BJ (cell line): ENCODE measurements at regions of chr11 and their contacts with region 1.

Region 1: GRCh38 chr11:12963792-12964536 is 45.2 kb upstream of the RASSF10 start:
- DNase-seq: no peak
- H3K4me3 ChIP-seq: no peak overlapping the region
- H3K27me3 ChIP-seq: peaks cover 2% of the 10 kb centered on the region
- CTCF ChIP-seq: peak; percentile 84

Region 2: GRCh38 chr11:12331239-12331874 is 632.6 kb before region 1 on chr11:
- CTCF ChIA-PET with region 1: interaction called, 46 read pairs
- POLR2A ChIA-PET with region 1: no interaction called
- DNase-seq: peak; percentile 40
- H3K4me3 ChIP-seq: no peak overlapping the region
- H3K27me3 ChIP-seq: no peaks in the 10 kb centered on the region
- CTCF ChIP-seq: peak; percentile 69

Region 3: DNA sequence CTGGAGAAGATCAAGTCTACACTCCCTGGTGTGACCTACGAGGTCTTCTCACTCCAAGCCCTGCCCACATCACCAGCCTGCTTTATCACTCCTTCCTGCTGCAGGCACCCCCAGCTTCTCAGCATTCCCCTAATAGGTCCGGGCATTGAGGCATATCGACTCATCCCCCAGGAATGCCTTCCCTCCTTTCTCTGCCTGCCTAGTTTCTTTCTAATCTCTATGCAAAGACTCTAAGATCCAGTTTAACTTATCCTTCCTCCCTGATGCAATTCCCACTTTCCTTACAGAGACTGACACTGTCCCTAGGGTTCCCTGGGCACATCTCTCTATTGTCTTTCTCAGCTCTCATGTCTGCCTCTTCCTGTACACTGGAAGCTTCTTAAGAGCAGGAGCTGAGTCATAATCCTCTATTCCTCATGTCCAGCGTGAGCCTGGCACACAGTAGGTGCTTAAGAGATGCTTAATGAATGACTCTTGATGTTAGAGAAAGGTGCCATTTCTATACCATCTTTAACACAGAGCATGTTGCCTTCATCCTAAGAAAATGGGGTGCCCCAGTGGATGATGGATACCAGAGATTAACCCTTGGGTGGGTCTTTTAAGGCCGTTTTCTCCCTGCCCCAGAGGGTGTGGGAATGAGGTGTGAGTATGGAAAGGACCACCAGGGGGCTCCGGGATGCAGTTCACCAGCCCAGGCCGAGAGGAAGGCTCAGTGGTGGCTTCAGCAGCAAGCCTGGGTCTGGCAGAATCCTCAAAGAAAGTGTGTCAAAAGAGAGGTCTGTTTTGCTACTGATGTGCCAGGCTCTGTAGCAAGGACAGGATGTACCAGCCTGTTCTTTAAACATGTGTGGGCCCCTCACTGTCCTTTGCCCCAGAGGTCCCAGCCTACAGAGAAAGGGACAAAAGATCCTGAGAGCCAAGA is 551.9 kb before region 1 on chr11:
- CTCF ChIA-PET with region 1: no interaction called
- POLR2A ChIA-PET with region 1: no interaction called
- DNase-seq: peak; percentile 81
- H3K4me3 ChIP-seq: no peak overlapping the region
- H3K27me3 ChIP-seq: no peaks in the 10 kb centered on the region
- CTCF ChIP-seq: peak; percentile 84

Region 4: GRCh38 chr11:12979928-12980689 is 16.1 kb after region 1 on chr11:
- CTCF ChIA-PET with region 1: interaction called, 26 read pairs
- POLR2A ChIA-PET with region 1: no interaction called
- DNase-seq: no peak
- H3K4me3 ChIP-seq: no peak overlapping the region
- H3K27me3 ChIP-seq: peaks cover 16% of the 10 kb centered on the region
- CTCF ChIP-seq: no peak

Region 5: DNA sequence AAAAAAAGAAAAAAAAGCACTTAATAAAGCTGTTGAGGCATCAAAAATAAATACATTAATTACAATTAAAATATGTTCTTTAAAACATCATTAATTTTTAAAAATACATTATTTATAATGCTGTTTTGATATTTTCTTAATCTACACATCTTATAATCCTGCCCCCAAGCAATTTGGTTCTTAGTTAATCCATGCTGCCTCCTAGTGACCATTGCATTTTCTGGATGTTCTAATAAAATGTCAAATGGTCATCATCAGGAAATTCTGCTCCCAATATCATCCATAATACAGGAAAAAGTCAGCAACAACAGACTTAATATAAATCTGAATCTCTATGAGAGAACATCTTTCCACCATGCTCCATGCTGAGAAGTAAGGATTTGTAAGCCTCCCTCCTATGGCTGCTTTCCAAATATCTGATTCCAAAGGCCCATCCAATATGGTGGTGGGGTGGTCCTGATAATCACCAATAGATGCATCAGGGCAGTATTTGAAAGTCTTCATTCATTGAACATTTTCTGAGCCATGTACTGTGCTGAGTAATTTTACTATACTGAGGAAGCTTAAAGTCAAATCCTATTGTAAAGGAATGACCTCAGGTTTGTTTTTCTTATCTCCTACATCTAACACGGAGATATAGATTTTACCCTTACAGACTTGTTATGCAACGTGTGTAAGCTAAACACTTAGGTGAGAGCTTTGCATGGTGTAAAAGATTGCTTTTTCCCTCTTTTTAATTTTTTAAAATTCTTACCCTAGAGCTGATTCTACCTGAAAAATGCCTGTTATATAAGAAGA is 189.0 kb after region 1 on chr11:
- CTCF ChIA-PET with region 1: interaction called, 154 read pairs
- POLR2A ChIA-PET with region 1: no interaction called
- DNase-seq: no peak
- H3K4me3 ChIP-seq: no peak overlapping the region
- H3K27me3 ChIP-seq: no peaks in the 10 kb centered on the region
- CTCF ChIP-seq: peak; percentile 55

Region 6: GRCh38 chr11:13183094-13183825 is 219.3 kb after region 1 on chr11:
- CTCF ChIA-PET with region 1: interaction called, 24 read pairs
- POLR2A ChIA-PET with region 1: no interaction called
- DNase-seq: peak; percentile 34
- H3K4me3 ChIP-seq: no peak overlapping the region
- H3K27me3 ChIP-seq: peaks cover 2% of the 10 kb centered on the region; the same call in 1 of the 2 replicates
- CTCF ChIP-seq: peak; percentile 65